ENCODE measurements at regions of chr2 and their contacts with region 1.

Region 1: DNA sequence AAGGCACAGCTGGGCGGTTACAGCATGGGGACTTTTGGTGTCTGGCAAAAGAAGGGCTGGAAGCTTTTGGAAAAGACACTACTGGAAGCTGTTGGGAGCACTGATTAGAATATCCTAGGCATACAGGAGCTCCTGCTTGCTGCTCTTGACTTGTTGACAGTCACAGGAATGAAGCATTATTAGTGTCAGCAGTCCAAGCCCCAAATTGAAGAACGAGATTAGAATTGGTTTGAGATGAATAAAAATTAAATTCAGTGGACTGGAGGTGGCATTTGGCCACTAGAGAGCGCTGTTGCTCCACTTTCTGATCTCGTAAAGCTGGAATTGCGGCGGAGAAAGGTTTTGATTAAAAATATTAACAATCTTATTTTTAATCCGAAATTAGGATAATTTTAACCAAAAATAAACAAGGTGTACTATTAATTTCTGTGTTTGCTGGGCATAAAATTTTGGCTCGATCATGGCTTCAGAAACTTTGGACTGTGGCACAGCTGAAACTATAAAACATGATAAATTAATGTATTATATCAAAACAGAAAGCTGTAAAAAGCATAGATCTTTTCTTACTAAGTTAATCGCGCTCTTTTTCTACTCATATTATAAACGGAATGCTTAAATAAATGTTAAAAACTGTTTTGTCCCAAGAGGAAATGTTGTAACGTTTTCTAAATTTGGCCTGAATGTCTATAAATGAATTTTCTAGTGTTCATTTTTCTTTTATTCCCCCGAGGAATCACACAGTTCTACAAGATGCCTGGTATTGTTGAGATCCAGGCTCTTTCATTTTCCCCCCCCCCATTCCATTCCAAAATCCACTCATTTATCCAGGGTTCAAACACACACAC is 2.4 kb upstream of the HOXD8 start:
- DNase-seq: peak; percentile 81
- ATAC-seq: no peak
- H3K4me3 Mint-ChIP-seq: no peak overlapping the region
- H3K27ac Mint-ChIP-seq: no peak overlapping the region
- H3K4me1 Mint-ChIP-seq: peaks cover 26% of the 10 kb centered on the region
- H3K27me3 Mint-ChIP-seq: peaks cover 71% of the 10 kb centered on the region
- CTCF ChIP-seq: peak; percentile 90

Region 2: GRCh38 chr2:176110975-176111663 is 16.0 kb before region 1 on chr2:
- CTCF ChIA-PET with region 1: interaction called, 28 read pairs
- POLR2A ChIA-PET with region 1: interaction called, 3 read pairs
- intact Hi-C with region 1: no loop called
- DNase-seq: peak; percentile 54
- ATAC-seq: no peak
- H3K4me3 Mint-ChIP-seq: no peak overlapping the region
- H3K27ac Mint-ChIP-seq: no peak overlapping the region
- H3K4me1 Mint-ChIP-seq: peaks cover 15% of the 10 kb centered on the region
- H3K27me3 Mint-ChIP-seq: peaks cover 81% of the 10 kb centered on the region
- CTCF ChIP-seq: peak; percentile 45

Region 3: GRCh38 chr2:176161819-176162626 is 34.9 kb after region 1 on chr2:
- CTCF ChIA-PET with region 1: interaction called, 8 read pairs
- POLR2A ChIA-PET with region 1: no interaction called
- intact Hi-C with region 1: loop called (anchors 5 kb)
- DNase-seq: no peak
- ATAC-seq: no peak
- H3K4me3 Mint-ChIP-seq: no peak overlapping the region
- H3K27ac Mint-ChIP-seq: no peak overlapping the region
- H3K4me1 Mint-ChIP-seq: peaks cover 23% of the 10 kb centered on the region
- H3K27me3 Mint-ChIP-seq: peaks cover 83% of the 10 kb centered on the region
- CTCF ChIP-seq: no peak

Region 4: DNA sequence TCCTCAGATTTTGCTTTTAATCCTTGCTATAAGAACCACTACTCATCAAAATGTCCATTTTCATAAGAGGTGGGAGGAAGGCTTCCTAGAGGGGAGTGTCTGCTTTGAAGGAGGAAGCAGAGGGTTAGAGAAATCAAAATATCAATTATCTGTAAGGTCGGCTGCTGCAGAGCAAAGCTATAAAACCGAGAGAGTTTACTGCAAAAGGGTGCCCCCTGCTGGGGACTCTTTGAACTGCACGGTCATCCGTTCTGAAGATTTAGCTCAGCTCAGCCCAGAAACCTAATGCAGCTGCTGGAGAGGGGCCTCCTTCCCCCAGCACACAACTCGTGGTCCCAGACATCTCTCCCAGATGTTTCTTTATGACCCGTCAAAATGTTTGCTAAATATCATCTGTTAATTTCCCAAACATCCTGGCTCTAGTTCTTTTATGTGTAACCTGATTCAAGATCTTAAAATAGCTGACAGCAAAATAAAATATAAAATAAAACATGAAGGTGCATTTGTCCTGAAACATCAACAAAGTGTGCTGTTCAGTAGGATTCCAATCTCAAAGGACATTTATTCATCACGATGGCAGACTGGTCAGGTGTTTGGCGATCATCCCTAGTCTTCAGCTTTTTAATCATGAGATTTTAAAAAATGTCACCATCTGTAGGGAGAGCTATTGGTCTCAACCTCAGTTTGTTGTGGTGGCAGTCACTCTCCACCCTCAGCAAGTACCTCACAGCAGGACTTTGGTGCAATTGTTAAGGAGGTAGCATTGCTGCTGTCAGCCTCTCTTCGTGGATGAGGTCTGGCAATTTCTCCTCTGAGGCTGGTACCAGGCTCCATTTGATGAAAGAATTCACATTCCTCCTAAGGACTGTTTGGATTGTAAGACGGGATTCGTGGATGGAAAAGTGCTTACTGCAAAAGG is 328.0 kb after region 1 on chr2:
- CTCF ChIA-PET with region 1: interaction called, 77 read pairs
- POLR2A ChIA-PET with region 1: no interaction called
- intact Hi-C with region 1: no loop called
- DNase-seq: peak; percentile 94
- ATAC-seq: peak; percentile 83
- H3K4me3 Mint-ChIP-seq: no peak overlapping the region
- H3K27ac Mint-ChIP-seq: no peak overlapping the region
- H3K4me1 Mint-ChIP-seq: peaks cover 2% of the 10 kb centered on the region
- H3K27me3 Mint-ChIP-seq: peaks cover 25% of the 10 kb centered on the region
- CTCF ChIP-seq: peak; percentile 85

Region 5: GRCh38 chr2:176653479-176654443 is 526.6 kb after region 1 on chr2:
- CTCF ChIA-PET with region 1: interaction called, 95 read pairs
- POLR2A ChIA-PET with region 1: no interaction called
- intact Hi-C with region 1: loop called (anchors 5 kb)
- DNase-seq: peak; percentile 64
- ATAC-seq: peak; percentile 71
- H3K4me3 Mint-ChIP-seq: no peak overlapping the region
- H3K27ac Mint-ChIP-seq: no peak overlapping the region
- H3K4me1 Mint-ChIP-seq: peaks cover 16% of the 10 kb centered on the region
- H3K27me3 Mint-ChIP-seq: peaks cover 31% of the 10 kb centered on the region
- CTCF ChIP-seq: peak; percentile 63